CD4-positive, alpha-beta T cell (primary cell): ENCODE measurements at regions of chr12 and their contacts with region 1.

Region 1: DNA sequence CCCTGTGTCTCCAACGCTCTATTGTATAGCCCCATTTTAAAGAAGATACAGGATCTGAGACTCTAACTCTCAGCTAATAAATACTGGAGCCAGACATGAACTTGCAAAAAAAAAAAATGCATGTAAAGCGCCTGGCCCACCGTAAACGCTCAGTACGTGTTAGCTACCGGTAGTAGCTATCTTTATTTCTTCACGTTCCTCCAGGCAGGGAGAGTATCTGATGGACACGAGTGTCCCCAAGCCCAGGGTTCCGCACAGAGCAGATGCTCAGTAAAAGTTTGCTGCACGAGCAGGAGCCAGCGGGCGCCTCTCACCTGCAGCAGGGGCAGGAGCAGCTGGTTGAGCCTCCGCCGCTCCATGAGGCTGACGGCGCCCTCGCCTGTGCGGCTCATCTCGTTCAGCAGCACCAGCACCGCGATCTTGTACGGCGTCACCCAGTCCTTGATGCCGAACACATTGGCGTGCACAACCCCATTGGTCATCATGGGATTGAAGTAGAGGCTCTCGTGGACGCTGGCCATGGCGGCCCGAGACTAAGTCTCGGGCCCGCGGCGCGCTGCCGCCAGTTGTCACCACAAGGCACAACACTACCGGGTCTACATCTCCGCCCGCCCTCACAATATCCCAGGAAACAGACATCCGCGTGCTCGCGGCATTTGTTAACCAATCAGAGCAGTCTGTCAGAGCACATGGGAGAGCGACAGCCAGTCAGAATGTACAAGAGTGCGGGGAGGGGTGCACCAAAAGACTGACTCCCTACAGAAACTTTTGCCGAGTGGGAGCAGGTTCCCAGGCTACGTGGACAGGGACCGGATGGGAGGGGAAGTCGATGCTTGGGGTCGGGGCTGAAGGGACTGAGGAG is at the start of gene ANAPC5:
- DNase-seq: peak; percentile 80 to 97 (median 86)
- ATAC-seq: peak; percentile 97
- H3K4me3 ChIP-seq: peak within 1 kb of the TSS; percentile 67
- H3K4me3 Mint-ChIP-seq: peak within 1 kb of the TSS; percentile 95
- H3K27ac ChIP-seq: peak within 1 kb of the TSS; percentile 54 to 59
- H3K27ac Mint-ChIP-seq: peak within 1 kb of the TSS; percentile 87
- H3K4me1 ChIP-seq: peaks cover 32% of the 10 kb centered on the region
- H3K4me1 Mint-ChIP-seq: peaks cover 36% of the 10 kb centered on the region
- H3K27me3 ChIP-seq: no peaks in the 10 kb centered on the region
- H3K27me3 Mint-ChIP-seq: peaks cover 4% of the 10 kb centered on the region
- CTCF ChIP-seq: peak; percentile 20
- total RNA-seq, gene ANAPC5: 88.2 to 96.2 TPM

Region 2: GRCh38 chr12:120944645-120945231 is 407.3 kb before region 1 on chr12:
- CTCF ChIA-PET with region 1: no interaction called
- POLR2A ChIA-PET with region 1: no interaction called
- intact Hi-C with region 1: no loop called
- DNase-seq: peak; percentile 32 to 80 (median 58)
- ATAC-seq: peak; percentile 71
- H3K4me3 ChIP-seq: no peak overlapping the region
- H3K4me3 Mint-ChIP-seq: no peak overlapping the region
- H3K27ac ChIP-seq: no peak overlapping the region
- H3K27ac Mint-ChIP-seq: no peak overlapping the region
- H3K4me1 ChIP-seq: no peaks in the 10 kb centered on the region
- H3K4me1 Mint-ChIP-seq: peaks cover 5% of the 10 kb centered on the region
- H3K27me3 ChIP-seq: no peaks in the 10 kb centered on the region
- H3K27me3 Mint-ChIP-seq: peaks cover under 1% of the 10 kb centered on the region
- CTCF ChIP-seq: peak; percentile 68

Region 3: GRCh38 chr12:121240484-121241101 is 111.5 kb before region 1 on chr12:
- CTCF ChIA-PET with region 1: no interaction called
- POLR2A ChIA-PET with region 1: no interaction called
- intact Hi-C with region 1: loop called in 1 of 2 experiments (anchors 2 kb)
- DNase-seq: peak; percentile 84 to 99 (median 92)
- ATAC-seq: peak; percentile 92
- H3K4me3 ChIP-seq: peak overlapping the region; percentile 47
- H3K4me3 Mint-ChIP-seq: peak overlapping the region; percentile 90
- H3K27ac ChIP-seq: peak overlapping the region; percentile 86 to 88
- H3K27ac Mint-ChIP-seq: peak overlapping the region; percentile 100
- H3K4me1 ChIP-seq: peaks cover 45% of the 10 kb centered on the region
- H3K4me1 Mint-ChIP-seq: peaks cover 51% of the 10 kb centered on the region
- H3K27me3 ChIP-seq: no peaks in the 10 kb centered on the region
- H3K27me3 Mint-ChIP-seq: no peaks in the 10 kb centered on the region
- CTCF ChIP-seq: no peak

Region 4: DNA sequence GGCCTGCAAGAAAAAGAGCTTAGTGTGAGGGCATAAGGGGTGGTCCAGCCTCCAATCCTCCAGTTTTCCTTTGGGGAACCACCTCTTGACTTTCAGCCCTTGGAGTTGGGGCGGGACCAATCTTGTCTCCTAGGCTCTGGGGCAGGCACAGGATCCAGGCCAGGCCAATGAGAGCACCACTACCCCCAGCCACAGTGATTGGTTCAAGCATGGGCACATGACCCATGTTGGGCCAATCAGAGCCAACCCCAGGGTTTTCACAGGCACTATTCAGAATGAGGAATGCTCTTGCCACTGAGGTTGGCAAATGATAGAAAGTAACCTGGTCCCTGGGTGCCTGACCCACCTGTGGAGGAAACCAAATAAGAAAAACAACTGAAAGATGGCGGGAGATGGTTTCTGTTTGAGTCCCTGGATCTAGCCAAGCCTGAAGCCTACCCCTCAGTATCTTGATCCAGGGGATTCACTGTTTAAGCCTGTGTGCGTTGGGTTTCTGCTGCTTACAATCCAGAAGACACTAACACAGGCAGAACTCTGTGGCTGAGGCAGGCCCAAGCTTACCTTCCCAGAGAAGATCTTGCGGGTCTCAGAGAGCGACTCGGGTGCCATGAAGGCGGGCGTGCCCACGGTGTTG is 99.2 kb before region 1 on chr12:
- CTCF ChIA-PET with region 1: no interaction called
- POLR2A ChIA-PET with region 1: no interaction called
- intact Hi-C with region 1: no loop called
- DNase-seq: no peak
- ATAC-seq: no peak
- H3K4me3 ChIP-seq: no peak overlapping the region
- H3K4me3 Mint-ChIP-seq: no peak overlapping the region
- H3K27ac ChIP-seq: no peak overlapping the region
- H3K27ac Mint-ChIP-seq: no peak overlapping the region
- H3K4me1 ChIP-seq: no peaks in the 10 kb centered on the region
- H3K4me1 Mint-ChIP-seq: no peaks in the 10 kb centered on the region
- H3K27me3 ChIP-seq: no peaks in the 10 kb centered on the region
- H3K27me3 Mint-ChIP-seq: no peaks in the 10 kb centered on the region
- CTCF ChIP-seq: no peak

Region 5: GRCh38 chr12:121296618-121297434 is 55.2 kb before region 1 on chr12 and contains the start of gene CAMKK2:
- CTCF ChIA-PET with region 1: no interaction called
- POLR2A ChIA-PET with region 1: interaction called, 6 read pairs
- intact Hi-C with region 1: loop called (anchors 2 kb)
- DNase-seq: peak; percentile 73 to 96 (median 84)
- ATAC-seq: peak; percentile 88
- H3K4me3 ChIP-seq: peak within 1 kb of the TSS; percentile 83
- H3K4me3 Mint-ChIP-seq: peak within 1 kb of the TSS; percentile 92
- H3K27ac ChIP-seq: no peak within 1 kb of the TSS
- H3K27ac Mint-ChIP-seq: peak within 1 kb of the TSS; percentile 75
- H3K4me1 ChIP-seq: peaks cover 37% of the 10 kb centered on the region
- H3K4me1 Mint-ChIP-seq: peaks cover 13% of the 10 kb centered on the region
- H3K27me3 ChIP-seq: no peaks in the 10 kb centered on the region
- H3K27me3 Mint-ChIP-seq: no peaks in the 10 kb centered on the region
- CTCF ChIP-seq: peak; percentile 26
- total RNA-seq, gene CAMKK2: 6.7 to 6.8 TPM

Region 6: GRCh38 chr12:121334513-121335343 is 17.3 kb before region 1 on chr12:
- CTCF ChIA-PET with region 1: interaction called, 10 read pairs
- POLR2A ChIA-PET with region 1: interaction called, 5 read pairs
- intact Hi-C with region 1: no loop called
- DNase-seq: peak in 4 of 14 experiments; percentile 24 to 75 (median 71)
- ATAC-seq: peak; percentile 82
- H3K4me3 ChIP-seq: no peak overlapping the region
- H3K4me3 Mint-ChIP-seq: no peak overlapping the region
- H3K27ac ChIP-seq: no peak overlapping the region
- H3K27ac Mint-ChIP-seq: peak overlapping the region; percentile 58
- H3K4me1 ChIP-seq: no peaks in the 10 kb centered on the region
- H3K4me1 Mint-ChIP-seq: peaks cover 7% of the 10 kb centered on the region
- H3K27me3 ChIP-seq: no peaks in the 10 kb centered on the region
- H3K27me3 Mint-ChIP-seq: no peaks in the 10 kb centered on the region
- CTCF ChIP-seq: peak; percentile 95

Region 7: DNA sequence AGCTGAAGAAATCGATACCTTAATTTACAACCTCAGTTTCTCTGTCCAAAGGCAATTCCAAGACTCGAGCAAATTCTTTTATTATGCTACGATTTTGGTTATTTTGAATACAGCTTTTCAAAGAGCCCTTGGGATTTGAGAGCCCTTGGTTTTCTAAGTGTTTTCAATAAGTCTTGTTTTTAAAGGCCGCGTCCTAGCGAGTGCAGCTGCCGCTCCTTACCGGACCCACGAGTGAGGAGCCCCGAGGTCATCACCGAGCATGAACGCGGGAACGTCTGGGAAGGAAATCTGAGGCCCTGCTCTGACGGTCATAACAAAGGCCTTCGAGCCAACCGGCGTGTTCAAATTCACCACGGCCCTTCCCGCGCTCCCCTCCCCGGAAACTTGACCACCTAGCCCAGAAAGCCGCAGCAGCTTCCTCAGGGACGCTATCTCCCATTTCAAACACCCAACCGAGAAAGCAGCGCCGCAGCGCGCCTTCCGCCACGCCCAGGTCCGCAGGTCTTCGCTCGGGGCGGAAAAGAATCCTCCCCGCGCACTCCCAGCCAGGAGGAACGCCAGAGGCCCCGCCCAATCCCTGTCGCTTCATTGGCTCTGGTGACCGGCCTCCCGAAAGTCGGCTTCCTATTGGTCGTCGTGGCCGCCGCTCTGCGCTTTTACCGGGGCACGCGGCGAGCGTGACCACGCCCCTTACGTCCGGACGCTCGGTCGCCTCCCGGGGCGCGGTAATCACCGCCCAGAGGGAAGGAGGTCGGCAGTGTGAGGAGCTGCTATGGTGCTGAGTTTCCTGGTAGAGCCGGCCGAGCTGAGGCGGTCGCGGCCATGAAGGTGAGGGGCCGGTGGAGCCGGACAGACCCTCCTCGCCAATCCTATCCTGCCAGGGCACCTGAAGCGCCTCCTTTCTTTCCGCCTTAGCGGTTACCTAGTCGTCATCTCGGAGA is 47.6 kb after region 1 on chr12 and contains the start of gene RNF34:
- CTCF ChIA-PET with region 1: interaction called, 6 read pairs
- POLR2A ChIA-PET with region 1: interaction called, 52 read pairs
- intact Hi-C with region 1: loop called (anchors 1 kb)
- DNase-seq: peak; percentile 95 to 99 (median 98)
- ATAC-seq: peak; percentile 86
- H3K4me3 ChIP-seq: peak within 1 kb of the TSS; percentile 91
- H3K4me3 Mint-ChIP-seq: peak within 1 kb of the TSS; percentile 83
- H3K27ac ChIP-seq: peak within 1 kb of the TSS; percentile 91 to 93
- H3K27ac Mint-ChIP-seq: peak within 1 kb of the TSS; percentile 93
- H3K4me1 ChIP-seq: peaks cover 24% of the 10 kb centered on the region
- H3K4me1 Mint-ChIP-seq: peaks cover 47% of the 10 kb centered on the region
- H3K27me3 ChIP-seq: no peaks in the 10 kb centered on the region
- H3K27me3 Mint-ChIP-seq: no peaks in the 10 kb centered on the region
- CTCF ChIP-seq: no peak
- total RNA-seq, gene RNF34: 60.6 to 63.1 TPM

Region 8: DNA sequence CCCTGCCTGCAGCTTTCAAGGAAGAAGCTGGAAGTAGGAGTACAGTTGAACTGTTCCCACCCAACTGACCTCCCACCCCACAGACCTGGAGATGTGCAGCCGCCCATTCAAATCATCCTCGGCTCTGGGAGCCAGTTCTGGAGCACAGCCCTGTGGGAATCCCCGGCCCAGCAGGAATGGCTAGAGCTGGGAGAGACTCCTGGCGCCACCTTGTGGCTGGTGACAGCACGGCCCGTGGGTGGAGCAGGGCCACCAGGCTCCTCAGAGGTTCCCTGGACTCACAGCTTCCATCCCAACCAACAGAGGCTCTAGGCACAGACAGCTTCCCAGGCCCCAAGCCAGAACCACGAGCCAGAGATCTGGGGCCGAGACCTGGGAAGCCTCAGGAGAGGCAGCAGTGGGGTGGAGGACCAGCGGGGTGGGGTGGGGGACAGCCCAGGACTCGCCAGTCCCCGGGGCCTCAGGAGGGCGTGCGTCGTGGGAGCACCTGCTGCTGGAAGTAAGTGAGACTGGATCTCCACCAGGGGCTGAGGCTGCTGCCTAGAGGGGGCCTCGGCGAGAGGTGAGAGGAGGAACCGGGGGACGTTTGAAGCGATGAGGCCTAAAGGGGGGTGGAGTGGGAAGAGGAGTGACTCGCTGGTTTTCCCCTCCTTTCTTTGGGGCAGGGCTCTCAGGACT is 91.3 kb after region 1 on chr12:
- CTCF ChIA-PET with region 1: interaction called, 5 read pairs
- POLR2A ChIA-PET with region 1: no interaction called
- intact Hi-C with region 1: loop called in 1 of 2 experiments (anchors 5 kb)
- DNase-seq: peak; percentile 43 to 79 (median 60)
- ATAC-seq: peak; percentile 84
- H3K4me3 ChIP-seq: no peak overlapping the region
- H3K4me3 Mint-ChIP-seq: no peak overlapping the region
- H3K27ac ChIP-seq: no peak overlapping the region
- H3K27ac Mint-ChIP-seq: no peak overlapping the region
- H3K4me1 ChIP-seq: no peaks in the 10 kb centered on the region
- H3K4me1 Mint-ChIP-seq: peaks cover 4% of the 10 kb centered on the region
- H3K27me3 ChIP-seq: no peaks in the 10 kb centered on the region
- H3K27me3 Mint-ChIP-seq: no peaks in the 10 kb centered on the region
- CTCF ChIP-seq: peak; percentile 86

Region 9: GRCh38 chr12:121467115-121467793 is 115.2 kb after region 1 on chr12:
- CTCF ChIA-PET with region 1: no interaction called
- POLR2A ChIA-PET with region 1: no interaction called
- intact Hi-C with region 1: loop called in 1 of 2 experiments (anchors 5 kb)
- DNase-seq: peak; percentile 73 to 95 (median 88)
- ATAC-seq: peak; percentile 87
- H3K4me3 ChIP-seq: peak overlapping the region; percentile 49
- H3K4me3 Mint-ChIP-seq: no peak overlapping the region
- H3K27ac ChIP-seq: peak overlapping the region in 1 of 2 donors; percentile 43
- H3K27ac Mint-ChIP-seq: no peak overlapping the region
- H3K4me1 ChIP-seq: peaks cover 35% of the 10 kb centered on the region
- H3K4me1 Mint-ChIP-seq: peaks cover 39% of the 10 kb centered on the region
- H3K27me3 ChIP-seq: no peaks in the 10 kb centered on the region
- H3K27me3 Mint-ChIP-seq: no peaks in the 10 kb centered on the region
- CTCF ChIP-seq: no peak